Lower leg skin (tissue), 4 donors: ENCODE measurements at regions of chr7 and their contacts with region 1.

Region 1: GRCh38 chr7:149005241-149006050 is 22.9 kb downstream of the PDIA4 start:
- DNase-seq: peak; percentile 71 to 96
- H3K4me3 ChIP-seq: no peak overlapping the region
- CTCF ChIP-seq: peak in 1 of 3 donors; percentile 23
- POLR2A ChIP-seq: no peak

Region 2: DNA sequence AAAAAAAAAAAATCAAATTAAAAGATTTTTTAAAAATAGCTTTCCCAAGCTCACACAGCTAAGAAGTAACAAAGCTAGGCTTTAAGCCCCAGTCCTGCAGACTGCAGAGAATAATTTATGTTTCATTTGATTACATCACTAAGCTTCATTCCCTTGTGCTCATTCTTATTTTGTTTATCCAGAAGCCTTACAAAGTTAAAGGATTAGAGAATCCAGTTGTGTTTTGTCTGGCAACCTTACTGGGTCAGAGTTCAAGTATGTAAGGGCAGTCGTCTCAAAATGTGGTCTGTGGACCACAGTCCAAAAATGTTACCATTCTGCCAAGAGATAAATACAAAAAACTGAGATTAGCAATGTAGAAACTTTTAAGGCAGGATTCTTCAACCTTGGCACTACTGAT is 89.3 kb before region 1 on chr7:
- intact Hi-C with region 1: no loop called
- DNase-seq: no peak
- H3K4me3 ChIP-seq: no peak overlapping the region
- CTCF ChIP-seq: no peak
- POLR2A ChIP-seq: no peak

Region 3: DNA sequence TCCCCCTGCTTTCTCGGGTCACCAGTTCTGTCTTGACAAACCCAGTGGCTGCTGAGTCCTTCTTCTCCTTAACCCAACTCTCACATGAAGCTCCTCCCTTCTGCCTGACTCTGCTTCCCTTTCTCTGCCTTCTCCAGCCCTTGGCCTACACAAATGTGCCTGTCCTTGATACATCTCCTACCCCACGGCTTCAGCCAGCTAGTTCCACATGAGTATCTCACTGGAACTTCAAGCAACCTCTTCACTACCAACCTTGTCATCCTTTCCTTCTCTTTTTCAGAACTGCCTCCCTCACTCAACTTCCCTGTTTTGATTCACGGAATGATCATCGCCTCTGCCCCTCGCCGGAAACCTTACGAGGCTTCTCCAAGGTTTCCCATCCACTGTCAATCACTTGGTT is 33.1 kb before region 1 on chr7:
- intact Hi-C with region 1: no loop called
- DNase-seq: no peak
- H3K4me3 ChIP-seq: no peak overlapping the region
- CTCF ChIP-seq: no peak
- POLR2A ChIP-seq: no peak

Region 4: GRCh38 chr7:149067876-149068275 is 62.4 kb after region 1 on chr7:
- intact Hi-C with region 1: loop called (anchors 10 kb)
- DNase-seq: no peak
- H3K4me3 ChIP-seq: no peak overlapping the region
- CTCF ChIP-seq: no peak
- POLR2A ChIP-seq: no peak

Region 5: GRCh38 chr7:149090397-149091195 is 85.2 kb after region 1 on chr7 and contains the start of gene ZNF786:
- intact Hi-C with region 1: loop called (anchors 10 kb)
- DNase-seq: peak; percentile 68 to 96
- H3K4me3 ChIP-seq: peak within 1 kb of the TSS; percentile 76
- CTCF ChIP-seq: peak in 1 of 3 donors; percentile 94
- POLR2A ChIP-seq: no peak
- total RNA-seq, gene ZNF786: 8.3 to 19.1 (median 16.3) TPM

Region 6: GRCh38 chr7:149474309-149475114 is 469.1 kb after region 1 on chr7:
- intact Hi-C with region 1: no loop called
- DNase-seq: no peak
- H3K4me3 ChIP-seq: no peak overlapping the region
- CTCF ChIP-seq: no peak
- POLR2A ChIP-seq: no peak